CD4-positive, alpha-beta T cell (primary cell): ENCODE measurements at regions of chr11 and their contacts with region 1.

Region 1: DNA sequence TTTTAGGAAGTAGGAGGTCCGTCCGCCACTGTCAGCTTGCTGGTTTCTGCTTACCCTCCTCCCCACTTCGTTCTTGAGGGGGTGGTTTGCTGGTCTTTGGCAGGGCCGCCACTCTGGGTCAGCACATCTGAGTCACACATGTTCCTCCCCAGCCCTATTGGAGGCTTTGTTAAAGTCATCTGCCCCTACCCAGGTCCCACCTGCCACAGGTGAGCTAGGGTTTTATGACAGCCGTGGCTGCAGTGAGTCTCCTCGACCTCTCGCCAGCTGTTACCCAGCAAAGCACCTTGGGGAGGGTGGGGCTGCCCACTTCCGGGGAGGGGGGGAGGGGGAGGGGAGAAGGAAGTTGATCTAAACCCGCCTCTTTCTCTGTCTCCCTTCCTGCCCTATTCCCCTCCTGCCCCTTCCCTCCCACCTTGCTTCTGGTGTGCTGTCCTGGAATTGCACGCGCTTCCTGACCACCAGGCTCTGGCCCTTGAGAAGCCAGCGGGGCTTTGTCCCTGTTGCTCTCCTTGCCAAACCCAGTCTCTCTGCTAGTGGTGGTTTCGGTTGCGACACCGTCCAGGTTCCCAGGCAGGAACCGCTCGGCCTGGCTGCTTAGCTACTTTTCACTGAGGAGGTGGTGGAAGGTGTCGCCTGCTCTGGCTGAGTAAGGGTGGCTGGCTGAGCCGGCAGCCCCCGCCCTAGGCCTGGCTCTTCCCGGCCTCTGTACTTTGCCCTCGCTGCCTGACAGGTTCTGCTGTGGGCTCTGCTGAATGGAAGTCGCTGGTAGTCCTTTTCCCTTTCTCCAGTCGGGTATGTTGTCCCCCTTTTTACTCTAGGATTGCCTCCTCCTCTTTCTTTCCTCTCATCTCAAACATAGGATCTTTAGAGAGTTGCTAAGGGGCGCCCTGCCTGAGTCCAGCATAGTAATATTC is 28.5 kb downstream of the RCOR2 start:
- DNase-seq: peak; percentile 55 to 86 (median 72)
- ATAC-seq: peak; percentile 87
- H3K4me3 ChIP-seq: peak overlapping the region; percentile 81
- H3K4me3 Mint-ChIP-seq: peak overlapping the region; percentile 96
- H3K27ac ChIP-seq: peak overlapping the region; percentile 69 to 73
- H3K27ac Mint-ChIP-seq: peak overlapping the region; percentile 78
- H3K4me1 ChIP-seq: peaks cover 86% of the 10 kb centered on the region
- H3K4me1 Mint-ChIP-seq: peaks cover 78% of the 10 kb centered on the region
- H3K27me3 ChIP-seq: no peaks in the 10 kb centered on the region
- H3K27me3 Mint-ChIP-seq: no peaks in the 10 kb centered on the region
- CTCF ChIP-seq: no peak

Region 2: GRCh38 chr11:63871962-63872799 is 16.2 kb before region 1 on chr11:
- CTCF ChIA-PET with region 1: interaction called, 3 read pairs
- POLR2A ChIA-PET with region 1: interaction called, 8 read pairs
- intact Hi-C with region 1: loop called in 1 of 2 experiments (anchors 1 kb)
- DNase-seq: peak in 10 of 14 experiments; percentile 15 to 80 (median 32)
- ATAC-seq: peak; percentile 71
- H3K4me3 ChIP-seq: no peak overlapping the region
- H3K4me3 Mint-ChIP-seq: peak overlapping the region; percentile 49
- H3K27ac ChIP-seq: no peak overlapping the region
- H3K27ac Mint-ChIP-seq: peak overlapping the region; percentile 33
- H3K4me1 ChIP-seq: peaks cover 80% of the 10 kb centered on the region
- H3K4me1 Mint-ChIP-seq: peaks cover 83% of the 10 kb centered on the region
- H3K27me3 ChIP-seq: no peaks in the 10 kb centered on the region
- H3K27me3 Mint-ChIP-seq: no peaks in the 10 kb centered on the region
- CTCF ChIP-seq: no peak

Region 3: DNA sequence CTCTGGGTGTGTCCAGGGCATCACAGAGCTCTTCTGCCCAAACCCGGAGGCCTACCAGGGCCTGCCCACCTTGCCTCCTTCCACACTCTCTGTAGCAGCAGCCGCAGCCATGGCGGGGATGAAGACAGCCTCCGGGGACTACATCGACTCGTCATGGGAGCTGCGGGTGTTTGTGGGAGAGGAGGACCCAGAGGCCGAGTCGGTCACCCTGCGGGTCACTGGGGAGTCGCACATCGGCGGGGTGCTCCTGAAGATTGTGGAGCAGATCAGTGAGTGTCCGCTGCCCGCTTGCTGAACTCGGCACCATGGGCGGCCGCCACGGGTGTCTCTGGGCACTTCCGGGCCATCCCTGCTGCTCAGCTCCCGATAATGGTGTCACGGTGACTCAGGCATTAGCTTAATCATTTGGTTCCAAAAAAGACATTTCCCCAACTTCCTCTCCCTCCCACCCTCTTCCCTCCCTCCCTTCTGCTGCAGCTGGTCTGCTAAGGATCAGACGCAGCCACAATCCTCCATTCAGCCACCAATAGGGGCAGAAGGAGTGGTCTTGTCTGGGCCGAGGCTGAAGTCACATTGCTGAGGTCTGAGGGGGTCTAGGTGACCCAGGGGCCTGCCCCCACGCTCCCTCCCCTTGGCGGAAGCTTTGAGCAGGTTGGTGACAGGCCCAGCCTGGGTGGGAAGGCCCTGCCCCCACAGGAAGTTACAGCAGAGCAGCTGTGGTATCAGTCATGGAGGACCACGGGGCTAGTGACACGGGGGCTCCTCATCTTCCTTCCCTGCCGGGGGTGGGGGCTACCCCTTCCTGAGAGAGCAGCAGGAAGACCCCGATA is 319.0 kb after region 1 on chr11:
- CTCF ChIA-PET with region 1: no interaction called
- POLR2A ChIA-PET with region 1: no interaction called
- intact Hi-C with region 1: no loop called
- DNase-seq: peak; percentile 41 to 91 (median 72)
- ATAC-seq: peak; percentile 68
- H3K4me3 ChIP-seq: peak overlapping the region; percentile 100
- H3K4me3 Mint-ChIP-seq: peak overlapping the region; percentile 98
- H3K27ac ChIP-seq: peak overlapping the region; percentile 86 to 90
- H3K27ac Mint-ChIP-seq: peak overlapping the region; percentile 93
- H3K4me1 ChIP-seq: peaks cover 61% of the 10 kb centered on the region
- H3K4me1 Mint-ChIP-seq: peaks cover 49% of the 10 kb centered on the region
- H3K27me3 ChIP-seq: no peaks in the 10 kb centered on the region
- H3K27me3 Mint-ChIP-seq: no peaks in the 10 kb centered on the region
- CTCF ChIP-seq: no peak